CD8-positive, alpha-beta T cell (primary cell): ENCODE measurements at regions of chr10 and their contacts with region 1.

Region 1: DNA sequence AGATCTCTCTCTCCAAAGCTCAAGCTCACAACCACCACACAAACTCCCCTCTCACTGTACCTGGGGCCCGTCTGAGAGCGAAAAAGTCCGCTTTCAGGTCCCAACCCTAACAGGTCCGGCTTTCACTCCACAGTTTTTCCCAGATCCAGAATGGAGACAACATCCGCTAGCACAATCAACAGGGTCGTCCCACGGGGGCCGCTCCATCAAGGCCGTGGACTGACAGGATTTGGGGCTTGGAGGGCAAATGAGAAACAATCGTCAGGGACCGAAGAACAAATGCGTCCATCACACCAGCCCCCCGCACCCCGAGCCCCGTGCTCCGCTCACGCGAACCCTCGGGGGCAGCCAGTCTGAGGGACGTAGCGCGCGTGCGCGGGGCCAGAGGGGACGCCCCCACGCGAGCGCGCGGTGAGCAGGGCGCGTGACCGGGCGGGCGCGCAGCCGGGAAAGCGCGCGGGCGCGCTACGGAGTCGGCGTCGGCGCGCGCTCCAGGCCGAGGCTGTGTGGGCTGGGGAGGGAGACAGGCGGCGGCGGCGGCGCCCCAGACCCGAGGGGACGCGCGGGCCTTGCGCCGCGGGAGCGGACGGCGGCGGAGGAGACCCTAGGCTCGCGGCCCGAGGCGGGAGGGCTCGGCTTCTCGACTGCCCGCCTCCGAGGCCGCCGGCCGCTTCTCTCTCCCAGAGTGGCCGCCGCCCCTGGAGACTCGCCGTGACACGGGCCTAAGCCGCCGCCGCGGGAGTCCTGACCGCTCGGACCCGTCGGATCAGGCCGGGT is at the start of gene SLK:
- DNase-seq: peak; percentile 72 to 95 (median 84)
- ATAC-seq: peak; percentile 83
- H3K4me3 ChIP-seq: peak within 1 kb of the TSS; percentile 96 to 97
- H3K4me3 Mint-ChIP-seq: peak within 1 kb of the TSS; percentile 96
- H3K27ac ChIP-seq: peak within 1 kb of the TSS; percentile 83 to 86
- H3K27ac Mint-ChIP-seq: peak within 1 kb of the TSS; percentile 89
- H3K4me1 ChIP-seq: peaks cover 14% of the 10 kb centered on the region
- H3K4me1 Mint-ChIP-seq: peaks cover 44% of the 10 kb centered on the region
- H3K27me3 ChIP-seq: no peaks in the 10 kb centered on the region
- H3K27me3 Mint-ChIP-seq: no peaks in the 10 kb centered on the region
- CTCF ChIP-seq: no peak
- total RNA-seq, gene SLK: 23.8 to 24.6 TPM

Region 2: GRCh38 chr10:103584216-103585010 is 382.4 kb before region 1 on chr10:
- CTCF ChIA-PET with region 1: no interaction called
- POLR2A ChIA-PET with region 1: no interaction called
- intact Hi-C with region 1: loop called (anchors 1 to 2 kb)
- DNase-seq: peak; percentile 40 to 93 (median 70)
- ATAC-seq: peak; percentile 76
- H3K4me3 ChIP-seq: peak overlapping the region; percentile 73 to 76
- H3K4me3 Mint-ChIP-seq: peak overlapping the region; percentile 84
- H3K27ac ChIP-seq: peak overlapping the region; percentile 65 to 78
- H3K27ac Mint-ChIP-seq: peak overlapping the region; percentile 93
- H3K4me1 ChIP-seq: peaks cover 11% of the 10 kb centered on the region
- H3K4me1 Mint-ChIP-seq: peaks cover 17% of the 10 kb centered on the region
- H3K27me3 ChIP-seq: peaks cover 0 to 3% of the 10 kb centered on the region in 2 experiments
- H3K27me3 Mint-ChIP-seq: no peaks in the 10 kb centered on the region
- CTCF ChIP-seq: no peak

Region 3: GRCh38 chr10:103911021-103911459 is 55.8 kb before region 1 on chr10:
- CTCF ChIA-PET with region 1: no interaction called
- POLR2A ChIA-PET with region 1: interaction called, 3 read pairs
- intact Hi-C with region 1: loop called in 1 of 2 experiments (anchors 2 kb)
- DNase-seq: peak; percentile 7 to 83 (median 53)
- ATAC-seq: peak; percentile 72
- H3K4me3 ChIP-seq: peak overlapping the region; percentile 24 to 39
- H3K4me3 Mint-ChIP-seq: peak overlapping the region; percentile 80
- H3K27ac ChIP-seq: peak overlapping the region; percentile 77 to 88
- H3K27ac Mint-ChIP-seq: peak overlapping the region; percentile 91
- H3K4me1 ChIP-seq: peaks cover 88% of the 10 kb centered on the region
- H3K4me1 Mint-ChIP-seq: peaks cover 82% of the 10 kb centered on the region
- H3K27me3 ChIP-seq: no peaks in the 10 kb centered on the region
- H3K27me3 Mint-ChIP-seq: no peaks in the 10 kb centered on the region
- CTCF ChIP-seq: no peak

Region 4: DNA sequence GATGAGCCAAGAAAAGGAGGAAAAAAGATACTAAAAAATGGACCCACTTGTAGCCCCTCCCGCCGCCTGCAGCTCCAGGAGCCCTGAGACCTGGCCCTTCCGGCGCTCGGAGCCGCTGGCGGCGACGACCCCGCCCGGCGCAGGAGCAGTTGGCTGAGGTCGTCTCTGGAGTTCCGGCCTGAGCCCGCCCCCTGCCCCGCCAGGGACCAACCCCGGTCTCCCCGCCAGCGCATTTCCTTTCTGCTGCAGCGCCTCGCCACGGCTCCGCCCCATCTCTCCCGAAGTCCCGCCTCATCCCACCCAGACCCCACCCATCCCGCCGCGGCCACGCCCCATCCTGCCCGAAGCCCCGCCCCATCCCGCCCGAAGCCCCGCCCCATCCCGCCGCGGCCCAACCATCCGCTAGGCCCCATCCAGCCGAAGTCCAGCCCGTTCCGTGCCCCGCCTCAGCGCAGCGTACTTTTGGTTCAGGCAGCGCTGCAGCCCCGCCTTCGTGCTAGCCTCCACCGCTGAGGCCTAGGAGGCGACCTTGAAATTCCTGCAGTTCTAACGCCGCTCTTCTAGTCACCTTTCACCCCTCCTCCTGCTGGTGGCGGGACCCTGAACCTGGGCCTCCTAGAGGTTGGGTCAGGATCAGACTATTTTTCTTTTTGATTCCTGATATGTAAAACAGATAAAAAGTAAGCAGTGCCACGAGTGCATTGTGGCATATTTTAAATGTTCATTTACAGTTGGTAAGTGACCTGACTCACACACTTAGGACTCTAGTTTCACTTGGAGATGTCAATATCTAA is 48.6 kb before region 1 on chr10 and contains the start of gene STN1:
- CTCF ChIA-PET with region 1: no interaction called
- POLR2A ChIA-PET with region 1: interaction called, 3 read pairs
- intact Hi-C with region 1: loop called (anchors 1 to 2 kb)
- DNase-seq: peak; percentile 85 to 98 (median 95)
- ATAC-seq: peak; percentile 92
- H3K4me3 ChIP-seq: peak within 1 kb of the TSS; percentile 85 to 86
- H3K4me3 Mint-ChIP-seq: peak within 1 kb of the TSS; percentile 98
- H3K27ac ChIP-seq: peak within 1 kb of the TSS; percentile 79 to 88
- H3K27ac Mint-ChIP-seq: peak within 1 kb of the TSS; percentile 97
- H3K4me1 ChIP-seq: peaks cover 36% of the 10 kb centered on the region
- H3K4me1 Mint-ChIP-seq: peaks cover 40% of the 10 kb centered on the region
- H3K27me3 ChIP-seq: no peaks in the 10 kb centered on the region
- H3K27me3 Mint-ChIP-seq: no peaks in the 10 kb centered on the region
- CTCF ChIP-seq: no peak
- total RNA-seq, gene STN1: 14.2 to 14.8 TPM

Region 5: GRCh38 chr10:103983367-103983911 is 16.6 kb after region 1 on chr10:
- CTCF ChIA-PET with region 1: interaction called, 6 read pairs
- POLR2A ChIA-PET with region 1: interaction called, 6 read pairs
- intact Hi-C with region 1: loop called in 1 of 2 experiments (anchors 2 kb)
- DNase-seq: peak in 3 of 9 experiments; percentile 19 to 71 (median 56)
- ATAC-seq: peak; percentile 83
- H3K4me3 ChIP-seq: peak overlapping the region; percentile 20 to 25
- H3K4me3 Mint-ChIP-seq: peak overlapping the region; percentile 40
- H3K27ac ChIP-seq: peak overlapping the region; percentile 3 to 74
- H3K27ac Mint-ChIP-seq: peak overlapping the region; percentile 82
- H3K4me1 ChIP-seq: peaks cover 48% of the 10 kb centered on the region
- H3K4me1 Mint-ChIP-seq: peaks cover 72% of the 10 kb centered on the region
- H3K27me3 ChIP-seq: no peaks in the 10 kb centered on the region
- H3K27me3 Mint-ChIP-seq: no peaks in the 10 kb centered on the region
- CTCF ChIP-seq: no peak

Region 6: GRCh38 chr10:104231784-104232612 is 265.1 kb after region 1 on chr10 and contains the start of gene CFAP43:
- CTCF ChIA-PET with region 1: no interaction called
- POLR2A ChIA-PET with region 1: no interaction called
- intact Hi-C with region 1: loop called in 1 of 2 experiments (anchors 1 kb)
- DNase-seq: peak; percentile 98 to 100 (median 99)
- ATAC-seq: peak; percentile 99
- H3K4me3 ChIP-seq: peak within 1 kb of the TSS; percentile 64 to 67
- H3K4me3 Mint-ChIP-seq: peak within 1 kb of the TSS; percentile 87
- H3K27ac ChIP-seq: peak within 1 kb of the TSS in 1 of 2 experiments; percentile 52
- H3K27ac Mint-ChIP-seq: peak within 1 kb of the TSS; percentile 79
- H3K4me1 ChIP-seq: peaks cover 4% of the 10 kb centered on the region
- H3K4me1 Mint-ChIP-seq: peaks cover 10% of the 10 kb centered on the region
- H3K27me3 ChIP-seq: peaks cover 0 to 10% of the 10 kb centered on the region in 2 experiments
- H3K27me3 Mint-ChIP-seq: peaks cover 9% of the 10 kb centered on the region
- CTCF ChIP-seq: no peak
- total RNA-seq, gene CFAP43: not detected